ENCODE measurements at regions of chrX and their contacts with region 1.

Region 1: DNA sequence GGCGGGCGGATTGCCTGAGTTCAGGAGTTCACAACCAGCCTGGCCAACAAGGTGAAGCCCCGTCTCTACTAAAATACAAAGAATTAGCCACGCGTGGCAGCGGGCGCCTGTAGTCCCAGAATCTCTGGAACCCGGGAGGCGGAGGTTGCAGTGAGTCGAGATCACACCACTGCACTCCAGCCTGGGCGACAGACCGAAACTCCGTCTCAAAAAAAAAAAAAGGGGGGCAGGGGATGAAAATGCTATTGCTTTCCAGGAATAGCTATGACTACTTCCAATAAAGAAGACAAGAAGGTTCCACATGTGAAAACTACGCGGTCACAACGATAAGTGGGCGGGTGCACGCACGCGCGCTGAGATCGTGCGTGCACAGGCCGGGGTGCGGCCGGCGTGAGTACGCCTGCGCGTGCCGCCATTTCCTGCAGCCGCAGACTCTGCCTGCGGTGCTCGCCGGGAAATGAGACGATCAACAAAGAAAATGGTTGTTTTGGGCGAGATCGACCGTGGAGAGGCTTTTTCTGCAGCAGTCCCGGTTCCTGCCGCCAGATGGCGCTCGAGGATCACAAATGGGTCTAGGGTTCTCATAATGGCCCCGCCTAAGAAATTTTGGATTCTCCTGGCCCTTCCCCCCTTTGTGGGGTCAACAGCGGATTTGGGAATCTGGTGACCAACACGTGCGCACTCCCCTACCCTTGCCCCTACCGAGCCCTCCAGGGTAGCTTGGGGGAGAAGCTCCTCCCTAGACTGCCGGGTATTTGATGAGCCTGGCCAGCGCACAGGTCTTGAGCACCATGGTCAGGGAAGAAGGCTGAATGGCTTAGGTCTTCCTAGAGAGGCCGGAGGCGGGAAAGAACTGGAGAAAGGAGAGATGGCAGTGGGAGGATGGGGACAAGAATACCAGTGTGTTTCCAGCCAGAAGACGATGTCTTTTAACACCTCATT is 35.1 kb downstream of the PNMA5 start:
- DNase-seq: peak; percentile 76 to 92
- ATAC-seq: peak; percentile 98 to 99
- H3K4me3 ChIP-seq: peak overlapping the region; percentile 44
- H3K27ac ChIP-seq: peak overlapping the region; percentile 73 to 85
- H3K4me1 ChIP-seq: no peaks in the 10 kb centered on the region
- CTCF ChIP-seq: peak; percentile 89
- EP300 ChIP-seq: no peak
- POLR2A ChIP-seq: peak; percentile 32
- RAD21 ChIP-seq: peak; percentile 90 to 96

Region 2: GRCh38 chrX:152878976-152879755 is 79.6 kb before region 1 on chrX:
- CTCF ChIA-PET with region 1: no interaction called
- POLR2A ChIA-PET with region 1: no interaction called
- DNase-seq: no peak
- ATAC-seq: no peak
- H3K4me3 ChIP-seq: no peak overlapping the region
- H3K27ac ChIP-seq: no peak overlapping the region
- H3K4me1 ChIP-seq: no peaks in the 10 kb centered on the region
- CTCF ChIP-seq: no peak
- EP300 ChIP-seq: no peak
- POLR2A ChIP-seq: no peak
- RAD21 ChIP-seq: no peak

Region 3: GRCh38 chrX:152941328-152942106 is 17.3 kb before region 1 on chrX:
- CTCF ChIA-PET with region 1: interaction called, 23 read pairs
- POLR2A ChIA-PET with region 1: interaction called, 3 read pairs
- DNase-seq: peak; percentile 85 to 94
- ATAC-seq: peak; percentile 90 to 96
- H3K4me3 ChIP-seq: peak overlapping the region; percentile 62
- H3K27ac ChIP-seq: peak overlapping the region; percentile 85 to 96
- H3K4me1 ChIP-seq: peaks cover 8% of the 10 kb centered on the region; the same call in 1 of the 3 replicates
- CTCF ChIP-seq: peak; percentile 77
- EP300 ChIP-seq: no peak
- POLR2A ChIP-seq: peak; percentile 57
- RAD21 ChIP-seq: peak; percentile 76 to 95

Region 4: GRCh38 chrX:152969548-152969947 is 10.8 kb after region 1 on chrX:
- CTCF ChIA-PET with region 1: interaction called, 14 read pairs
- POLR2A ChIA-PET with region 1: no interaction called
- DNase-seq: no peak
- ATAC-seq: no peak
- H3K4me3 ChIP-seq: no peak overlapping the region
- H3K27ac ChIP-seq: no peak overlapping the region
- H3K4me1 ChIP-seq: no peaks in the 10 kb centered on the region
- CTCF ChIP-seq: no peak
- EP300 ChIP-seq: no peak
- POLR2A ChIP-seq: no peak
- RAD21 ChIP-seq: no peak

Measured in A549 (cell line).